Panc1 (cell line): ENCODE measurements at regions of chr1 and their contacts with region 1.

Region 1: DNA sequence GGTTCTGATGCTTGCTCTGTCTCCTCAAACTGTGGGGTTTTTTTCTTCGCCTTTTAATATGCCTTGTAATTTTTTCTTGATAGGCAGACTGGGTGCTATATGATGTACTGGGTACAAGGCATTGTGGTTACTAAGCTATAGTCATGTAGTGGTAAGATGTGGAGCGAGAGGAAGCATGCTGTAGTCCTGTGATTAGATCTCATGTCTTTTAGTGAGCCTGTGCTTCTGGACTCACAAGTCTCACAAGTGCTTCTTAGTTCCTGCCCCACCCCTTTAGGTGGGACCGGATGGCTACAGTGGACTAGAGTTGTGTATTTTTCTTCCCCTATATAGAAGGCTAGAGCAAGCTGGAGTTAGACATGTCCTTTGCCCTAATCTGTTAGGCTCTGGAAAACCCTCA is 178.7 kb downstream of the DNM3 start:
- DNase-seq: no peak
- ATAC-seq: no peak
- H3K4me3 ChIP-seq: no peak overlapping the region
- H3K27ac ChIP-seq: no peak overlapping the region
- H3K4me1 ChIP-seq: no peaks in the 10 kb centered on the region
- H3K27me3 ChIP-seq: no peaks in the 10 kb centered on the region
- CTCF ChIP-seq: no peak

Region 2: GRCh38 chr1:171801487-171801891 is 218.5 kb before region 1 on chr1:
- CTCF ChIA-PET with region 1: no interaction called
- POLR2A ChIA-PET with region 1: no interaction called
- in situ Hi-C with region 1: no loop called
- intact Hi-C with region 1: no loop called
- DNase-seq: peak; percentile 36
- ATAC-seq: peak; percentile 59; the same call in 1 of the 2 replicates
- H3K4me3 ChIP-seq: no peak overlapping the region
- H3K27ac ChIP-seq: peak overlapping the region; percentile 40; the same call in 1 of the 2 replicates
- H3K4me1 ChIP-seq: no peaks in the 10 kb centered on the region
- H3K27me3 ChIP-seq: no peaks in the 10 kb centered on the region
- CTCF ChIP-seq: peak; percentile 85

Region 3: GRCh38 chr1:172184506-172185191 is 164.7 kb after region 1 on chr1:
- CTCF ChIA-PET with region 1: interaction called, 3 read pairs
- POLR2A ChIA-PET with region 1: interaction called, 10 read pairs
- in situ Hi-C with region 1: no loop called
- intact Hi-C with region 1: no loop called
- DNase-seq: no peak
- ATAC-seq: peak; percentile 23; the same call in 1 of the 2 replicates
- H3K4me3 ChIP-seq: no peak overlapping the region
- H3K27ac ChIP-seq: peak overlapping the region; percentile 86
- H3K4me1 ChIP-seq: peaks cover 57% of the 10 kb centered on the region
- H3K27me3 ChIP-seq: no peaks in the 10 kb centered on the region
- CTCF ChIP-seq: no peak